Activated CD8-positive, alpha-beta memory T cell treated with anti-CD3 and anti-CD28 coated beads, Interleukin-2, amount 10 ng/mL, durations not matched to agents 7 days and 5 days (primary cell): ENCODE measurements at regions of chr2 and their contacts with region 1.

Region 1: DNA sequence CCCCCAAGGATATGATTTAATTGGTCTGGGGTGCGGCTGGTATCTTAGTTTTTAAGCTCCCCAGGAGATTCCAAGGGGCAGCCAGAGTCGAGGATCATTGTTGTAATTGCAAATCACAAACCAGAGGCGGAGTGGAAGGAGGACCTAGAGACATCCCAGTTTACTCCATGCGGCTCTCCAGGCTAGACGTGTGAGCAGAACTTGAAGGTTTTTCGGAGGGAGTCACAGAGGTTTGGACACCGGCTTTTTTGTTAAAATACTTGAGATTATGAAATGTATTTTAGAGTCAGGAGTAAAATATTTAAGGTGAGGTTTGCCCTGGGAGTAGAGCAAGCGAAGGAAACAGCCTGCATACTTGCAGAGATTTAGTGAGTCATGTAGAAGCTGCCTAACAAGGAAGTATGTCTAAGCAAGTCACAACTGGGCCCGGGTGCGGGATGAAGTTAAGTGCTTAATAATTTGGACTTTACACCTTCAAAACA is 39.5 kb downstream of the TGOLN2 start:
- DNase-seq: no peak
- ATAC-seq: no peak
- H3K4me3 Mint-ChIP-seq: no peak overlapping the region
- H3K27ac Mint-ChIP-seq: no peak overlapping the region
- H3K4me1 Mint-ChIP-seq: peaks cover 35% of the 10 kb centered on the region
- H3K27me3 Mint-ChIP-seq: no peaks in the 10 kb centered on the region

Region 2: GRCh38 chr2:85066874-85067351 is 221.4 kb before region 1 on chr2:
- CTCF ChIA-PET with region 1: interaction called, 20 read pairs
- DNase-seq: peak; percentile 65
- ATAC-seq: peak; percentile 61
- H3K4me3 Mint-ChIP-seq: no peak overlapping the region
- H3K27ac Mint-ChIP-seq: no peak overlapping the region
- H3K4me1 Mint-ChIP-seq: peaks cover 2% of the 10 kb centered on the region
- H3K27me3 Mint-ChIP-seq: peaks cover 19% of the 10 kb centered on the region

Region 3: GRCh38 chr2:85255813-85256594 is 32.3 kb before region 1 on chr2:
- CTCF ChIA-PET with region 1: no interaction called
- DNase-seq: no peak
- ATAC-seq: no peak
- H3K4me3 Mint-ChIP-seq: no peak overlapping the region
- H3K27ac Mint-ChIP-seq: no peak overlapping the region
- H3K4me1 Mint-ChIP-seq: no peaks in the 10 kb centered on the region
- H3K27me3 Mint-ChIP-seq: no peaks in the 10 kb centered on the region

Region 4: DNA sequence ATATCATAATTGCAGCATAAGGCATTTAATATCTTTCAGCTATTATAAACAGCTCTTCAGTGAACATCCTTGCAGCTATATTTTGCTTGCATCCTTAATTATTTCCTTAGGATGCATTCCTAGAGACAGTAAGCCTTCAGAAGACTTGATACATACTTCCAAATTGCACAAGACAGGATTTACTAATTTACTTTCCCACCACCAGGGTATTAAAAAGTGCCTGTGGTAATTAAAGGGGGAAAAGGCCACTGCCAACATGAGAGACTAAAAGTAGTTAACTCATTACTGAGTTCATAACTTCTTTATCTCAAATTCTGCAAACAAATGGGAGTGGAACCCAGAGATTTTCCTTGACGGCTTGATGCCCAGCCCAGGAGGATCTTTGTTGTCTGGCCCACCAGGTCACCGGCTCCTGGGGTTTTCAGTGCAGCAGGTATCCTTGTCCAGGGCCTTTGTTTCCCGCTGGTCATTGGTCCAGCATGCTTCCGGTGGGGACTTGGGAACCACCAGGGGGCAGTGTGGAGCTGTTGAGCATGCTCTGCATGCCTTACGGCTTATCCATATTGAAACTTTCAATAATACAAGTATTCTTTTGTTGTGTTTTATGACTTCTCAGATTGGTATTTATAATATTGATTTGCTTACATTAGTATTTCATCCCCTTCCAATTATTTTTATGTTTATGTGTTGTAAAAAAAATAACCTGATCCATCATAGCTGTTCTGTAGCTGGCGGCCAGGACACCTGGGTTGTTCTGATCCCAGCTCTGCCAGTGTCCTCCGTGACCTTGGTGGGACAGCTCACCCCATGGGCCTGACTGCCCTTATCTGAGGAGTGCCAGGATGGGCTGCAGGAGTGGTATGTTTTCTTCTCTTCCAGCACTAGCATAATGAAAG is 21.9 kb before region 1 on chr2:
- CTCF ChIA-PET with region 1: interaction called, 44 read pairs
- DNase-seq: peak; percentile 79
- ATAC-seq: peak; percentile 80
- H3K4me3 Mint-ChIP-seq: no peak overlapping the region
- H3K27ac Mint-ChIP-seq: no peak overlapping the region
- H3K4me1 Mint-ChIP-seq: no peaks in the 10 kb centered on the region
- H3K27me3 Mint-ChIP-seq: peaks cover 20% of the 10 kb centered on the region

Region 5: DNA sequence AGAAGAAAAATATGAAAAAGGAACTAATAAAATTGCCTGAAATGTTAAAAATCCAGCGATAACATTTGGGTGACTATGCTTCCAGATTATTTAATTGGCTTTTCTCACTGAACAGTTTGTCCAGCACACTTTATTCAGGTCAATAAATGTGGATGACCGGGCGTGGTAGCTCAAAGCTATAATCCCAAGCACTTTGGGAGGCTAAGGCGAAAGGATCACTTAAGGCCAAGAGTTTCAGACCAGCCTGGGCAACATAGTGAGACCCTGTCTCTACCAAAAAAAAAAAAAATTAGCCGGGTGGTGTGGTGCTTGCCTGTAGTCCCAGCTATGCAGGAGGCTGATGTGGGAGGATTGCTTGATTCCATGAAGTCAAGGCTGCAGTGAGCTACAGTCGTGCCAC is 15.9 kb before region 1 on chr2:
- CTCF ChIA-PET with region 1: interaction called, 44 read pairs
- DNase-seq: no peak
- ATAC-seq: no peak
- H3K4me3 Mint-ChIP-seq: no peak overlapping the region
- H3K27ac Mint-ChIP-seq: no peak overlapping the region
- H3K4me1 Mint-ChIP-seq: peaks cover 2% of the 10 kb centered on the region
- H3K27me3 Mint-ChIP-seq: peaks cover 29% of the 10 kb centered on the region

Region 6: GRCh38 chr2:85302121-85302520 is 13.8 kb after region 1 on chr2:
- CTCF ChIA-PET with region 1: interaction called, 38 read pairs
- DNase-seq: no peak
- ATAC-seq: no peak
- H3K4me3 Mint-ChIP-seq: no peak overlapping the region
- H3K27ac Mint-ChIP-seq: no peak overlapping the region
- H3K4me1 Mint-ChIP-seq: peaks cover 7% of the 10 kb centered on the region
- H3K27me3 Mint-ChIP-seq: peaks cover 29% of the 10 kb centered on the region